Mammary epithelial cell (primary cell): ENCODE measurements at regions of chr7 and their contacts with region 1.

Region 1: DNA sequence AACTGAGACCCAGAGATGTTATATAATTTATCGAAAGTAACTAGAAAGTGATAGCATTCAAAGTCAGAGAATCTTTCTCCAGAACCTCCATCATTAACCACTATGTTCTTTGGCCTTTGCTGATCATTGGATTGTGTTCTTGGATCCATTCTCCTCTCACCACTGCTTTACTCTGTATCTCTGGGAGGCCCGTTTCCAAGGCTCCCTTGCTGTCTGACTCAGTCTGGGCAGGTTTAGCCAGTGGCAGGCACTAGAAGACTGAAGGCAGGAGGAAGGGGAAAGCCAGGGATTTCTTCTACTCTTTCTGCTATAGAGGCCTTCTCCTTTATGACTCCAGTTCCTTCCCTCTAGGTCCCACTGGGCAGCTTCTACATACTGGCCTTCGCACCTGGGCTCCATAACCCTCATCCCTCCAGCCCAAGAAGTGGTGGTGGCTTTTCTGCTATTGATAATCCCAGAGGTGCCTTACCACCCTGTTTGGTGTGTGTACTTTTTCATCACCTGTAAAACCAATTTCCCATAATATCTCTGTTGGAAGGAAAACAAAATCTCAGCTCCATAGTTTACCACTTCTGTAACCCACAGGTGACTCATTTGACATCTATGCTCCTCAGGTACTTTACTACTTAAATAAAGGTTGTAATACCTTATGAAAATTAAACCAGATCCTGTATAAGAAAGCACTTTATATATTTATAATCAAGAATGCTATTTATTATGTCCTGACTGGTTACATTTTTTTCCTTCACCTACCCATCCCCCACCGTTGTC is 36.0 kb downstream of the BCAP29 start:
- DNase-seq: peak; percentile 32
- H3K4me3 ChIP-seq: no peak overlapping the region
- H3K27ac ChIP-seq: no peak overlapping the region
- H3K4me1 ChIP-seq: peaks cover 28% of the 10 kb centered on the region
- H3K27me3 ChIP-seq: no peaks in the 10 kb centered on the region
- CTCF ChIP-seq: no peak

Region 2: GRCh38 chr7:107414198-107414597 is 201.9 kb before region 1 on chr7:
- CTCF ChIA-PET with region 1: no interaction called
- dilution Hi-C with region 1: no loop called
- in situ Hi-C with region 1: no loop called
- intact Hi-C with region 1: no loop called
- DNase-seq: no peak
- H3K4me3 ChIP-seq: no peak overlapping the region
- H3K27ac ChIP-seq: no peak overlapping the region
- H3K4me1 ChIP-seq: no peaks in the 10 kb centered on the region
- H3K27me3 ChIP-seq: no peaks in the 10 kb centered on the region
- CTCF ChIP-seq: no peak

Region 3: DNA sequence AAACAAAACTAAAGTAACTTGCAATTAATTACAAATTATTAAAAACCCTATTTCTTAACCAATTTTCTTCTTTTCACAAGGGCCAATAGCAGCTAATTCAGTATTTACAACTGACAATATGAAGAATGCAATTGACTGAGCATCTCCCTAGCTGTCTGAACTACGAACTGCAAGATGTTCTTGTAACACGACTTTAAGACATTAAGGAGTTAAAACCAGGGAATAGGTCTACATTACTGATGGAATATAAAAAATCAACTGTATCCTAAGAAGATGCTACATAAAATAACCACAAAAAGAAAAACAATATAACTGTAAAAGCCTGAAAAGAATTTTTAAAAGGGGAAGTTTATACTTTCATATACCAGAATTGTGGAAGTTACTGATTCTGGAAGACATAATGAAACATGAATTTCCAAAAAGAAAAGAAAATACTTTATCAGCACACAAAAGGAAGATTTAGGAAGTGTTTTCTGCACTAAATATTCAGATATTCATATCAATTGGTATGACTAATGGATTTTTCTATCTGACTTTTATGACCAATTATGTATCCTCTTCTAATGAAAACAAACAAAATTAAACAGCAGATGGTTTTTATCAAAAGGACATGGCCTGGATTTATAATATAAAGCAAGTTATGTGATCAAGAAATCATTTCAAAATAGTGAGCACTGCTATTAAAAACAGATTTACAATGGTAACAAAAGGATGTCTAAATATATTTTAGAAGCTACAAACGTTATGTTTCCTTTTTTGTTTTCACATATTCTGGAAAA is 144.6 kb before region 1 on chr7:
- CTCF ChIA-PET with region 1: no interaction called
- dilution Hi-C with region 1: no loop called
- in situ Hi-C with region 1: no loop called
- intact Hi-C with region 1: no loop called
- DNase-seq: no peak
- H3K4me3 ChIP-seq: no peak overlapping the region
- H3K27ac ChIP-seq: no peak overlapping the region
- H3K4me1 ChIP-seq: no peaks in the 10 kb centered on the region
- H3K27me3 ChIP-seq: no peaks in the 10 kb centered on the region
- CTCF ChIP-seq: no peak

Region 4: DNA sequence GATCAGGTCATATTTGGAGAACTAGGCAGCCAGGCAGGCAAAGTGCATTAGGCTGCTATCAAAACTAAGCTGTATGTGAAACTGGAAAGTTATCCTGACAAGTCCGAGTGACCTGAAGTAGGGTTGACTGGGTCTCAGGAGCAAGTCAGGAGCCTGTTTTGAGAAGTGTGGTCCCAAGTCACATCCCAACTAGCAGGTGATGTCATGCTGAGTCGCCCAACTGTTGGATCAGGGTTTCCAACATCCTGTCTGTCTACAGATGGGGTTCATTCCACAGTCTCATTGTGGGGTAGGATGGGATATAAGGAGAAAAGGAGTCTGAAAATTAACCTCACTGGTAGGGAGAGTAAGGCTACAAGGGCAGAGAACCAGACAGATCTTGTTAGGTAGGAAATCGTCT is 71.6 kb after region 1 on chr7:
- CTCF ChIA-PET with region 1: no interaction called
- dilution Hi-C with region 1: no loop called
- in situ Hi-C with region 1: no loop called
- intact Hi-C with region 1: no loop called
- DNase-seq: peak; percentile 61
- H3K4me3 ChIP-seq: no peak overlapping the region
- H3K27ac ChIP-seq: no peak overlapping the region
- H3K4me1 ChIP-seq: peaks cover 10% of the 10 kb centered on the region
- H3K27me3 ChIP-seq: no peaks in the 10 kb centered on the region
- CTCF ChIP-seq: no peak

Region 5: GRCh38 chr7:107700570-107700969 is 84.5 kb after region 1 on chr7:
- CTCF ChIA-PET with region 1: no interaction called
- dilution Hi-C with region 1: loop called (anchors 5 kb)
- in situ Hi-C with region 1: no loop called
- intact Hi-C with region 1: no loop called
- DNase-seq: no peak
- H3K4me3 ChIP-seq: no peak overlapping the region
- H3K27ac ChIP-seq: no peak overlapping the region
- H3K4me1 ChIP-seq: no peaks in the 10 kb centered on the region
- H3K27me3 ChIP-seq: no peaks in the 10 kb centered on the region
- CTCF ChIP-seq: no peak

Region 6: GRCh38 chr7:107768272-107768671 is 152.2 kb after region 1 on chr7:
- CTCF ChIA-PET with region 1: no interaction called
- dilution Hi-C with region 1: no loop called
- in situ Hi-C with region 1: no loop called
- intact Hi-C with region 1: no loop called
- DNase-seq: peak; percentile 63
- H3K4me3 ChIP-seq: no peak overlapping the region
- H3K27ac ChIP-seq: no peak overlapping the region
- H3K4me1 ChIP-seq: no peaks in the 10 kb centered on the region
- H3K27me3 ChIP-seq: no peaks in the 10 kb centered on the region
- CTCF ChIP-seq: no peak